ENCODE measurements at regions of chr2 and their contacts with region 1.

Region 1: DNA sequence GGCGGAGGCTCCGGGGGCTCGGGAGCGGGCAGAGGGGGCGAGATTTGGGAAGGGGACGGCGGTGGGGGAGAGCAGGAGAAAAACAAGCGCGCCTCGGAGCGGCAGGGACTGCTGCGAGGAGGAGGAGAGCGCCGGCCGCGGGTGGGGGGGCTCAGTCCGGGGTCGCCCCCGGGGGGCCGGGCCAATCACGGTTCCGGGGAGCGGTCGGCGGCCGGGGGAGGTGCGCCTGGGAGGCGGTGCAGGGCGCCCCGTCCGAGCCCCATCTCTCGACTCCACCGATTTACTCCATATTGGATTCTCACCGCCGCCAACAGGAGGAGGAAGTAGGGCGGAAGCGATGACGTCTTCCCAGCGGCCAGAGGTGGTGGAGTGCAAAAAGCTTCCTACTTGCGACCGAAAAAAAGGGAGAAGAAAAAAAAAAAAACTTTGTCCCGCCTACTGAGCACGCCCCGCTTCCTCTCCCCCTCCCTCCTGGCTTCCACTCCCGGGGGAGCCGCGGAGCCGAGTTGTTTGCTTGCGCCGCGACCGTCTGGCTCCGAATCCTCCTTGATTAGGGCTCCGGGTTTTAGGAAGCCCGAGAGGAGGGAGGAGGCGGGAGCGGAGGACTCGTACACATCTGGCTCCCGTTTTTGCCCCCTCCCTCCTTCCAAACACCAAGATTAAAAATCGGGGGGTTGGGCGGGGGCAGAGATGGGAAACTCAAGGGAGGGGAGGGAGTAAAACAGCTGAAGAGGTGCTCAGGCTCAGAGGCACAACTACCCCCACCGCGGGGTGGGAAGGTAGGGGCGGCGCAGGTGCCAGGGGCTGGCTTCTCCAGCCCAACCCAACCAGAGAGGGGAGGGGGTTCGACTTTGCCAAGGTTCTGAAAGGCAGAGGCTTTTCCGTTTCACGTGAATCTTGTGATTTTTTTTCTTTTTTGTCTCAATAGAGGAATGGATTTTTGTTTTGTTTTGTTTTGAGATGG is at the start of gene SPRED2:
- DNase-seq: peak; percentile 83
- ATAC-seq: peak; percentile 31
- H3K4me3 ChIP-seq: peak within 1 kb of the TSS; percentile 62 to 96 (median 71)
- H3K4me3 Mint-ChIP-seq: peak within 1 kb of the TSS; percentile 91
- H3K27ac ChIP-seq: peak within 1 kb of the TSS in 1 of 2 donors; percentile 60
- H3K27ac Mint-ChIP-seq: peak within 1 kb of the TSS; percentile 84
- H3K4me1 ChIP-seq: peaks cover 16 to 38% of the 10 kb centered on the region in 2 donors
- H3K4me1 Mint-ChIP-seq: peaks cover 30% of the 10 kb centered on the region
- H3K27me3 ChIP-seq: peaks cover 0 to 47% (median 27%) of the 10 kb centered on the region in 4 experiments
- H3K27me3 Mint-ChIP-seq: peaks cover 33% of the 10 kb centered on the region
- CTCF ChIP-seq: no peak
- total RNA-seq, gene SPRED2: 0.53 and 1.3 TPM in 2 replicates

Region 2: GRCh38 chr2:63588385-63589147 is 1843.9 kb before region 1 on chr2 and contains the starts of genes MDH1 and WDPCP:
- CTCF ChIA-PET with region 1: no interaction called
- POLR2A ChIA-PET with region 1: no interaction called
- intact Hi-C with region 1: loop called (anchors 10 kb)
- DNase-seq: peak; percentile 98
- ATAC-seq: peak; percentile 84
- H3K4me3 ChIP-seq: peak within 1 kb of the TSS; percentile 93 to 98 (median 94)
- H3K4me3 Mint-ChIP-seq: peak within 1 kb of the TSS; percentile 91
- H3K27ac ChIP-seq: peak within 1 kb of the TSS; percentile 93 to 94
- H3K27ac Mint-ChIP-seq: peak within 1 kb of the TSS; percentile 93
- H3K4me1 ChIP-seq: peaks cover 14 to 19% of the 10 kb centered on the region in 2 donors
- H3K4me1 Mint-ChIP-seq: peaks cover 37% of the 10 kb centered on the region
- H3K27me3 ChIP-seq: no peaks in the 10 kb centered on the region
- H3K27me3 Mint-ChIP-seq: no peaks in the 10 kb centered on the region
- CTCF ChIP-seq: no peak
- total RNA-seq, gene MDH1: 87.8 and 95.6 TPM in 2 replicates
- total RNA-seq, gene WDPCP: 22.8 and 31.4 TPM in 2 replicates

Region 3: DNA sequence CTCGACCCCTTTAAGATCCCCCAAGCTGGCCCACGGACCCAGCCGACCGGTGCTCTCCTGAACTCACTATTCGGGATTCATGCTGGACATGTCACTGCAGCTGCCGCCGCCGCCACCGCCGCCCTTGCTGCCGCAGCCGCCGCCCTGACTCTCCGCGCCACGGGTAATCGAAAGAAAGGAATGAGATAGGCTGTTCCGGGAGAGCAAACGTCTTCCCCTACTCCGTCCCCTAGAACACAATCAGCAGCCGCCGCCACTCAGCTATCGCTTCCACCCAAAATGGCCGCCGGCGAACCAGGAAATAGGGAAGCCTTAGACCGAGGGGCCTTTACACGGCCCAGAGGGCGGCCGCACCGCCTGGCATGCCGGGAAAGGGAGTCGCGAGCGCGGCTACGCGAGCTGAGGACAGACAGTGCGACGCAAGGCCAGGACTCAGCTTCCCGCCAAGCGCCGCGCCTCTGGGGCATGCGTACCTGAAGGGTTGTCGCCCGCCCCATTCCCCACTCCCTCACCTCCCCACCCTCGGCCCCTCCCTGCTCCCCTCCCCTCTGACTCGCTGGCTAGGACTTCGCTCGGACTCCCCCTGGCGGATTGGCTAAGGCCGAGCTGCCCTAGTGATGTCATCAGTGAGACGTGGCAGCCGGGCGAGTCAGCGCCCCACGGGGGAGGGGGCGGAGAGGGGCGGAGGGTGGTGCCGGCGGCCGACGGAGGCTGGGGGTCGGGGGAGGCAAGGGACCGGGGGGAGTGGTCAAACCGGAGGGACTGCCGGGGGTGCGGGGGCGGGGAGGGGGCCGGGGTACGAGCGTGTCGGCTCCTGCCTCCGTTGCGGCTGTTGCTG is 302.5 kb before region 1 on chr2 and contains the start of gene RAB1A:
- CTCF ChIA-PET with region 1: no interaction called
- POLR2A ChIA-PET with region 1: no interaction called
- intact Hi-C with region 1: loop called (anchors 2 kb)
- DNase-seq: peak; percentile 99
- ATAC-seq: peak; percentile 88
- H3K4me3 ChIP-seq: peak within 1 kb of the TSS; percentile 96 to 97 (median 97)
- H3K4me3 Mint-ChIP-seq: peak within 1 kb of the TSS; percentile 100
- H3K27ac ChIP-seq: peak within 1 kb of the TSS; percentile 94 to 98
- H3K27ac Mint-ChIP-seq: peak within 1 kb of the TSS; percentile 100
- H3K4me1 ChIP-seq: peaks cover 23 to 25% of the 10 kb centered on the region in 2 donors
- H3K4me1 Mint-ChIP-seq: peaks cover 38% of the 10 kb centered on the region
- H3K27me3 ChIP-seq: no peaks in the 10 kb centered on the region
- H3K27me3 Mint-ChIP-seq: no peaks in the 10 kb centered on the region
- CTCF ChIP-seq: no peak
- total RNA-seq, gene RAB1A: 42.2 and 43.7 TPM in 2 replicates

Region 4: DNA sequence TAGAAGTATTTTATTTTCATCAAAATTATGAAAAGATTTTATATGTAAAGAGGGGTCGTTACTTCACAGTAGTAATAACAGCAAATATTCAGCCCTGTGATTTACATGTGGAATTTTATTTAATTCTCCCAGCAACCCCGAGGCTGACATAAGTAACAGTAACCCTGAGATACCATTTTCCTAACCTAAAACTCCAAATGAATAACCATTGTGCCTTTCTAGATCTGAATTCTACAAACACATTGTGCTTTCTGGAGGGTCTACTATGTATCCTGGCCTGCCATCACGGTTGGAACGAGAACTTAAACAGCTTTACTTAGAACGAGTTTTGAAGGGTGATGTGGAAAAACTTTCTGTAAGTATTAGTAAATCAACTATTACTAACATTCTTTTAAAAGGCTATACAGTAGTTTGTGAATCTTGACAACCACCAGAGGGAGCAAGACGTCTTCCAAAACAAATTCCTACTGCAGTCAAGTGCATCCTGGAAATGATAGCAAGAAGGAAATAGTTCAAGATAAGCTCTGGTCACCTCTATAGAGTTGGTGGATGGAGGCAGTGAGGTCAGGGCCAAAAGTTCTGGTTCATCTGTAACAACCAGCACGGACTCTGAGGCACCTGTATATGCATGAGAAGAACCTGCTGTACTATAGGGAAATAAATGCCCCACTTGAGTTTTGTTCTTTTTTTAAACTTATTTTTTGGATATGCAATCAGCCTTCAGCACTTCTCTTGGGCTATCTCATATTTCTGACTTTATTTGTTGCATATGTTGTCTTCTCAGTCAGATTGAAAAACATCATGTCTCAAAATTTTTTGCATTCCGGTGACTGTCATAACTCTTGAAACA is 167.5 kb before region 1 on chr2:
- CTCF ChIA-PET with region 1: no interaction called
- POLR2A ChIA-PET with region 1: no interaction called
- intact Hi-C with region 1: loop called (anchors 5 kb)
- DNase-seq: peak; percentile 62
- ATAC-seq: no peak
- H3K4me3 ChIP-seq: no peak overlapping the region
- H3K4me3 Mint-ChIP-seq: no peak overlapping the region
- H3K27ac ChIP-seq: no peak overlapping the region
- H3K27ac Mint-ChIP-seq: no peak overlapping the region
- H3K4me1 ChIP-seq: no peaks in the 10 kb centered on the region
- H3K4me1 Mint-ChIP-seq: peaks cover 2% of the 10 kb centered on the region
- H3K27me3 ChIP-seq: no peaks in the 10 kb centered on the region
- H3K27me3 Mint-ChIP-seq: no peaks in the 10 kb centered on the region
- CTCF ChIP-seq: peak; percentile 82

Region 5: GRCh38 chr2:65420712-65421431 is 11.6 kb before region 1 on chr2:
- CTCF ChIA-PET with region 1: no interaction called
- POLR2A ChIA-PET with region 1: no interaction called
- intact Hi-C with region 1: loop called (anchors 1 kb)
- DNase-seq: peak; percentile 77
- ATAC-seq: peak; percentile 90
- H3K4me3 ChIP-seq: peak overlapping the region in 1 of 5 experiments; percentile 20
- H3K4me3 Mint-ChIP-seq: peak overlapping the region; percentile 20
- H3K27ac ChIP-seq: no peak overlapping the region
- H3K27ac Mint-ChIP-seq: no peak overlapping the region
- H3K4me1 ChIP-seq: peaks cover 14 to 15% of the 10 kb centered on the region in 2 donors
- H3K4me1 Mint-ChIP-seq: peaks cover 18% of the 10 kb centered on the region
- H3K27me3 ChIP-seq: peaks cover 0 to 29% (median 19%) of the 10 kb centered on the region in 4 experiments
- H3K27me3 Mint-ChIP-seq: peaks cover 51% of the 10 kb centered on the region
- CTCF ChIP-seq: no peak

Measured in B cell (primary cell).